B cell (primary cell): ENCODE measurements at regions of chr3 and their contacts with region 1.

Region 1: DNA sequence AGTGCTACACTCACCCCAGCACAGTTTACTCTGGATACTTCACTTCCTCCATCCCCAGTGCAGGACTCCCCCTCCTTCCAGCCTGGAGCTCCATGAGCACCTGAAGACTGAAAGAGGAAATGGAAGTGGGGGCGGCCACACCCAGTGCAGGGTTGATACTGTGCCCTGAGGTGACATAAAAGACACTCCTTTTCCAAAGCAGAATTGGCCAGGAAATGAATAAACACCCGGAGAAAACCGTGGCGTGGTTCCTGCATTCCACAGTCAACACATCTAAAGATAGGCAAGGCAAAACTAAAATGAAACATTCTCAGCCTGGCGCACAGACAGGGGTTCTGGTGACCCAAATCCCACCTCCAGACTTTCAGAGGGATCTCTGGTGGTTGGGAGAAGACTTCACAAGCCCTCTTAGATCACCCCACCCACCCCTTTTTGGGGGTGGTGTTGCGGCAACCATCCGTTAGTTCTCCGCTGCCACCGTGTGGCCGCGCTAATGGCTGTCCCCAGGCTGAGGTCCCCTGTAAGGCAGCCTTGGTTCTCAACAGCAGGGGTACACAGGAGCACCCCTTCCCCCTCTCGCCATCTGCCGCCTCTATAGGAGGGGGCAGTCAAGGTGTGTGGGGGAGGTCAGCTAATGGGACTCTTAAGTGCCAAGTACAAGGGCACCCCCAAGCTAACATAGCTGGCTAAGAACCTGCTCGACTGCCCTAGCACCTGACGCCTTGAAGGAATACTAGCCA is 2.5 kb upstream of the MST1R start:
- DNase-seq: peak; percentile 66
- ATAC-seq: peak; percentile 37
- H3K4me3 ChIP-seq: peak overlapping the region in 3 of 5 experiments; percentile 5 to 39 (median 6)
- H3K4me3 Mint-ChIP-seq: peak overlapping the region; percentile 74
- H3K27ac ChIP-seq: peak overlapping the region in 1 of 2 donors; percentile 30
- H3K27ac Mint-ChIP-seq: peak overlapping the region; percentile 83
- H3K4me1 ChIP-seq: peaks cover 14 to 36% of the 10 kb centered on the region in 2 donors
- H3K4me1 Mint-ChIP-seq: peaks cover 26% of the 10 kb centered on the region
- H3K27me3 ChIP-seq: no peaks in the 10 kb centered on the region
- H3K27me3 Mint-ChIP-seq: no peaks in the 10 kb centered on the region
- CTCF ChIP-seq: peak; percentile 62

Region 2: DNA sequence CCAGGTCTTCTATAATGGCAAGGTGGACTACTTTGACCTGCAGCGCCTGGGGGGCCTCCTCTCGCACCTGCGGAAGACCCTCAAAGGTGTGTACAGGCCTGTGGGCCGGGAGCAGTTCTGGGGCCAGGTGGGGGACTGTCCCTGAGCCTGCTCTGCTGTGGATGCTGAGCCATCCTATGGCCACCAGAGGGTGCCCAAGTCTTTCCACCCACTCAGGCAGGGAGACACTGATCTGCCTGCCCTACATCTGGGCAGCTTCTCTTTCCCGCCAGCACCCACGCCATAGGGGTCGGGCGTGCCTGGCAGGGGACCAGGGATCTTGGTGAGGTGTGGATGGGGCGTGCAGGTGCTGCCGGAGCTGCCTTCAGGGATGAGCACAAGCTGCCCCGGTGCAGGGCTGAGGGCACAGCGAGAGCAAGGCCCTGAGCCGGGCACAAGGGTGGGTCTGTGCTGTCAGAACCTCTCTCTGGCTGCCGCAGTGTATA is 202.7 kb before region 1 on chr3:
- CTCF ChIA-PET with region 1: no interaction called
- POLR2A ChIA-PET with region 1: no interaction called
- intact Hi-C with region 1: loop called (anchors 1 kb)
- DNase-seq: peak; percentile 81
- ATAC-seq: peak; percentile 99
- H3K4me3 ChIP-seq: no peak overlapping the region
- H3K4me3 Mint-ChIP-seq: no peak overlapping the region
- H3K27ac ChIP-seq: no peak overlapping the region
- H3K27ac Mint-ChIP-seq: peak overlapping the region; percentile 59
- H3K4me1 ChIP-seq: no peaks in the 10 kb centered on the region
- H3K4me1 Mint-ChIP-seq: peaks cover 6% of the 10 kb centered on the region
- H3K27me3 ChIP-seq: no peaks in the 10 kb centered on the region
- H3K27me3 Mint-ChIP-seq: no peaks in the 10 kb centered on the region
- CTCF ChIP-seq: peak; percentile 87

Region 3: DNA sequence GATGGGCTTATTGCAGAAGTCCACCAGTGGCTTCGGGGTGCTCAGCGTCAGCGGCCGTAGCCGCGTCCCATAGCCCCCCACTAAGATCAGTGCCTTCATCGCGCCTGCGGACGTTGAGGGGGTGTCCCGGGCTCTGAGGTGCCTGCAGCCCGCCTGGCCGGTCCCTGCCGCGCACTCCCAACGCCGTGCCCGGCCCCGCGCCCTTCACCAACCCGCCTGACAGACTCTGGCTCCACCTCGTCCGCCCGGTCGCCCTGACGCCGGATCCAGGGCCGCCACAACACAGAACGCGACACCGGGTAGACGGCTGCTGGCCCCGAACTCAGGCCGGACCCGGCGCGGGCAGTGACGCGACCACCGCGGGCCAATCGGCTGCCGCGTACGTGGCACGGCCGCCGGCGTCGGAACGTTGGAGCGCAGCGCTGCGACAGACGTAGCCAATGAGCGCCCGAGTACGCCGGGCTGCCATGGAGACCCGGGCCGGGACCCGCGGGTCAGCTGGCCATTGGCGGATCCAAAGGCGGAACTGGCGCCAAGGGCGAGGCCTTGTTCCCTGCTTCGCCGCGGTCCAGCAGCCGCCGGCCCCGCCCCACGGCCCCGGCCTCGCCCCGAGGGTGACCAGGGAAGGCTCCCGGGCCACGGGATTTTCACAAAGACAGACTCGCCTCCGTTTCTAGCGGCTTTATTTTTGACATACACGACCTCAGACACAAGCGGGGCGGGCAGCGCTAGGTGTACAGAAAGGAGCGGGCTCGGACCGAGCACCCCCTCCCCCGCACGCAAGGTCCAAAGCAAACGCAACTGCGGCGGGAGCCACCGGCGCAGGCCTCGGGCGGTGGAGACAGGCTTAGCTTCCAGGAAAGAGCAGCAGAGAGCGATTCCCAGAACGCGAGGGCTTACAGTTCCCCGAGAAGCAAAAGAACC is 182.3 kb before region 1 on chr3 and contains the start of gene GMPPB:
- CTCF ChIA-PET with region 1: interaction called, 4 read pairs
- POLR2A ChIA-PET with region 1: interaction called, 7 read pairs
- intact Hi-C with region 1: loop called (anchors 1 kb)
- DNase-seq: peak; percentile 97
- ATAC-seq: peak; percentile 78
- H3K4me3 ChIP-seq: peak within 1 kb of the TSS; percentile 63 to 99 (median 92)
- H3K4me3 Mint-ChIP-seq: peak within 1 kb of the TSS; percentile 96
- H3K27ac ChIP-seq: peak within 1 kb of the TSS; percentile 100
- H3K27ac Mint-ChIP-seq: peak within 1 kb of the TSS; percentile 97
- H3K4me1 ChIP-seq: peaks cover 27 to 59% of the 10 kb centered on the region in 2 donors
- H3K4me1 Mint-ChIP-seq: peaks cover 59% of the 10 kb centered on the region
- H3K27me3 ChIP-seq: no peaks in the 10 kb centered on the region
- H3K27me3 Mint-ChIP-seq: no peaks in the 10 kb centered on the region
- CTCF ChIP-seq: no peak
- total RNA-seq, gene GMPPB: 30.0 and 31.4 TPM in 2 replicates

Region 4: DNA sequence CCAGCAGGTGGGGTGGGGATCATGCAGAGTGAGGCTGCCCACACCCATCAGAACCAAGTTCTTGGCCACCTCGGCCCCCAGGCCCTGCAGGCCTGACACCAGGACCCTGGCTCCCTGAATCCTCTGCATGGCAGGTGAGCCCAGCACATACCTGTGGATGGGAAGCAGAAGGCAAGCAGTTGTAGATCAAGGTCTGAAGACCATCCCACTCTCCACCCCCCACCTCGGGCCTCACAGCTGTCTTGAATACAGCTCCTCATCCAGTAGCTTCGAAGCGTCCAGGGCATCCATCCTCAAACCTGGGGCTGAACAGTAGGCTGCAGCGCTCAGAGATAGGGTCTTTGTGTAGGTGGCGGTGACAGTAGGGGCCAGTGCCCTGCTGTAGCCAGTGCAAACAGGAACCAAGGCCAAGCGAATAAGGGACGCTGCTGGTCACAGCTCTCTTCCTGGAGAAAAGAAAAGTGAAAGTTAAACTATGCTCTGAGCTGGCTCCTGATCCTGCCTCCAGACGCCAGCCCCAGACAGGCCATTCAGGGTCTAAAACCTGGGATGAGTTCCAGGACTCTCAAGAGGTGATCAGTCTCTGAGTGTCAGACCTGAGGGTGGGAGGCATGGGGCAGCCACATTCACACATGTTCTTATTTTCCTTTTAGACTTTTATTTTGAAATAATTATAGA is 92.5 kb before region 1 on chr3 and contains the start of gene UBA7:
- CTCF ChIA-PET with region 1: no interaction called
- POLR2A ChIA-PET with region 1: interaction called, 11 read pairs
- intact Hi-C with region 1: no loop called
- DNase-seq: peak; percentile 70
- ATAC-seq: peak; percentile 95
- H3K4me3 ChIP-seq: peak within 1 kb of the TSS; percentile 48 to 93 (median 78)
- H3K4me3 Mint-ChIP-seq: peak within 1 kb of the TSS; percentile 99
- H3K27ac ChIP-seq: peak within 1 kb of the TSS; percentile 68 to 92
- H3K27ac Mint-ChIP-seq: peak within 1 kb of the TSS; percentile 99
- H3K4me1 ChIP-seq: peaks cover 26 to 47% of the 10 kb centered on the region in 2 donors
- H3K4me1 Mint-ChIP-seq: peaks cover 52% of the 10 kb centered on the region
- H3K27me3 ChIP-seq: no peaks in the 10 kb centered on the region
- H3K27me3 Mint-ChIP-seq: no peaks in the 10 kb centered on the region
- CTCF ChIP-seq: no peak
- total RNA-seq, gene UBA7: 418 and 436 TPM in 2 replicates

Region 5: GRCh38 chr3:49856181-49857005 is 49.8 kb before region 1 on chr3 and contains the start of gene TRAIP:
- CTCF ChIA-PET with region 1: interaction called, 5 read pairs
- POLR2A ChIA-PET with region 1: no interaction called
- intact Hi-C with region 1: loop called (anchors 1 kb)
- DNase-seq: peak; percentile 98
- ATAC-seq: peak; percentile 100
- H3K4me3 ChIP-seq: peak within 1 kb of the TSS; percentile 53 to 91 (median 69)
- H3K4me3 Mint-ChIP-seq: peak within 1 kb of the TSS; percentile 91
- H3K27ac ChIP-seq: peak within 1 kb of the TSS; percentile 56 to 59
- H3K27ac Mint-ChIP-seq: peak within 1 kb of the TSS; percentile 90
- H3K4me1 ChIP-seq: peaks cover 10 to 15% of the 10 kb centered on the region in 2 donors
- H3K4me1 Mint-ChIP-seq: peaks cover 11% of the 10 kb centered on the region
- H3K27me3 ChIP-seq: peaks cover 0 to 3% (median 0%) of the 10 kb centered on the region in 4 experiments
- H3K27me3 Mint-ChIP-seq: no peaks in the 10 kb centered on the region
- CTCF ChIP-seq: no peak
- total RNA-seq, gene TRAIP: 8.7 and 9.9 TPM in 2 replicates